ENCODE measurements at regions of chr12 and their contacts with region 1.

Region 1: GRCh38 chr12:67433385-67434175 is 164.4 kb downstream of the CAND1 start:
- DNase-seq: peak; percentile 74
- ATAC-seq: no peak
- H3K4me3 ChIP-seq: no peak overlapping the region
- H3K27ac ChIP-seq: peak overlapping the region; percentile 51; the same call in 1 of the 2 replicates
- H3K4me1 ChIP-seq: peaks cover 15% of the 10 kb centered on the region
- H3K27me3 ChIP-seq: no peaks in the 10 kb centered on the region
- CTCF ChIP-seq: no peak
- POLR2A ChIP-seq: no peak
- RAD21 ChIP-seq: no peak

Region 2: GRCh38 chr12:67268896-67269631 is 164.5 kb before region 1 on chr12 and contains the start of gene CAND1:
- CTCF ChIA-PET with region 1: no interaction called
- POLR2A ChIA-PET with region 1: no interaction called
- dilution Hi-C with region 1: no loop called
- in situ Hi-C with region 1: no loop called
- intact Hi-C with region 1: loop called (anchors 5 kb)
- DNase-seq: peak; percentile 99
- ATAC-seq: peak; percentile 89
- H3K4me3 ChIP-seq: peak within 1 kb of the TSS; percentile 54
- H3K27ac ChIP-seq: peak within 1 kb of the TSS; percentile 97
- H3K4me1 ChIP-seq: no peaks in the 10 kb centered on the region
- H3K27me3 ChIP-seq: no peaks in the 10 kb centered on the region
- CTCF ChIP-seq: no peak
- POLR2A ChIP-seq: peak; percentile 92
- RAD21 ChIP-seq: 0 out of 2 replicates have a peak, but pooled peaks have one; percentile 6
- total RNA-seq, gene CAND1: 91.4 and 139 TPM in 2 replicates

Region 3: DNA sequence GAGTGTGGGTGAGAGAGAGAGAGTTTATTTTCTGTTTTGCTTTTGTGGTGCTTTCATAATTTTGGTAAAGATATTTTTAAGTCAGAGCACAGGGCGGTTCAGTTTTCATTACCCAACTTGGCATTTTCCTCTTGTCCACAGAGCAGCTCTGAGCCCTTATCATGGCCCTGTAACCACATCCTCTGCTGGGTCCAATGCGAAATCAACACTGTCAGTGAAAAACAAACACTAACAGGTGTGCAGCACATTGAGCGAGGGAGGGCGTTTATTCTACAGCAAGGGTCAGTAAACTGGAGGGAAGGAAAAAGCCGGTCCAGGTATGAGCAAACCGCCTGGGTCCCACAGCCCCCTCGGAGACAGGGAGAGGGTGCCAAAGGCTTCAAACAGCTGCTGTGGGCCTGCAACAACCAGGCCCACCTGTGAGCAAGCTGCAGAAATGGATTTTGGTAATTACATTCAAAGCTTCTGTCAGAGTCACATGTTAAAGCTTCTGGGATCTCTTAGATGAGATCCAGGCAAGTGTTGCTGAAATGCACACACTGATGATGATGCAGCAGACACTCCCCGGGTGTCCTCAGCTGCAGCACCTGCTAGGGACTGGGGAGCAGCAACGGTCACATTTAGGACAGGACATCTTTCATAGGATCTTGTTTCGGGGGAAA is 82.2 kb after region 1 on chr12:
- CTCF ChIA-PET with region 1: no interaction called
- POLR2A ChIA-PET with region 1: no interaction called
- dilution Hi-C with region 1: no loop called
- in situ Hi-C with region 1: no loop called
- intact Hi-C with region 1: no loop called
- DNase-seq: no peak
- ATAC-seq: no peak
- H3K4me3 ChIP-seq: no peak overlapping the region
- H3K27ac ChIP-seq: no peak overlapping the region
- H3K4me1 ChIP-seq: no peaks in the 10 kb centered on the region
- H3K27me3 ChIP-seq: peaks cover 16% of the 10 kb centered on the region
- CTCF ChIP-seq: no peak
- POLR2A ChIP-seq: no peak
- RAD21 ChIP-seq: no peak

Region 4: DNA sequence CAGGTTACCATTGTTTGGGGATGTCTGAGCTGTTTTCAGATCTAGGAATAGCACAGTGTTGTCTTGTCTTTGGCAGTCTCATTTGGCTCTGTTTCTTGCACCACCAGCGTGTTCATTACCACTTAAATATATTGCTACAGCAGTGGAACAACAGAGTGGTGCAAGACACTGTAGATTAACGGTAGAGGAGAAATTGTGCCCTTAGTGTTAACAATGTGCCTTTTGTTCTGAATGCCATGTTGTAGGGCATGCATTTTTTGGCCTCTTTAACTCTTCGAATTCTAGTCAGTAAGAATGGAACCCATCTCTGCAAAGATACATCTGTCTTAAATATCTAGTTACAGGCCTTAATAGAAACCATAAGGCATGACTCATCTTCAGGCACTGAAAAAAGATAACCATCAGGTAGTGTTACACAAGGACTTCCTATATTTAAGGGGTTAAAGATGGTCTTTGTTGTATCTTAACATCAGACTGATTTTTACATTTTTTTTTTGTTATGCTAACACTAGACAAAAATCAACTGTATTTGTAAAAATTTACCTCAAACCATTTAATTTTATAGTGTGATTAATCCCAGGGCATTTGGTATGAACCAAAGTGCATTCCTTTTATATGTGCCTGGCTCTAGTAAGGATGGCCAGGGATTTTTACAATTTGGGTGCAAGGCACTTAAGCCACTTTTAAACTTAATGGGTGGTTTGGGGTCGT is 227.9 kb after region 1 on chr12:
- CTCF ChIA-PET with region 1: no interaction called
- POLR2A ChIA-PET with region 1: no interaction called
- dilution Hi-C with region 1: no loop called
- in situ Hi-C with region 1: loop called (anchors 10 kb)
- intact Hi-C with region 1: loop called (anchors 5 kb)
- DNase-seq: peak; percentile 87
- ATAC-seq: peak; percentile 33; the same call in 1 of the 2 replicates
- H3K4me3 ChIP-seq: no peak overlapping the region
- H3K27ac ChIP-seq: no peak overlapping the region
- H3K4me1 ChIP-seq: peaks cover 12% of the 10 kb centered on the region
- H3K27me3 ChIP-seq: no peaks in the 10 kb centered on the region
- CTCF ChIP-seq: no peak
- POLR2A ChIP-seq: no peak
- RAD21 ChIP-seq: no peak

Measured in IMR-90 (cell line).